Endothelial cell of umbilical vein (primary cell): ENCODE measurements at regions of chr6 and their contacts with region 1.

Region 1: DNA sequence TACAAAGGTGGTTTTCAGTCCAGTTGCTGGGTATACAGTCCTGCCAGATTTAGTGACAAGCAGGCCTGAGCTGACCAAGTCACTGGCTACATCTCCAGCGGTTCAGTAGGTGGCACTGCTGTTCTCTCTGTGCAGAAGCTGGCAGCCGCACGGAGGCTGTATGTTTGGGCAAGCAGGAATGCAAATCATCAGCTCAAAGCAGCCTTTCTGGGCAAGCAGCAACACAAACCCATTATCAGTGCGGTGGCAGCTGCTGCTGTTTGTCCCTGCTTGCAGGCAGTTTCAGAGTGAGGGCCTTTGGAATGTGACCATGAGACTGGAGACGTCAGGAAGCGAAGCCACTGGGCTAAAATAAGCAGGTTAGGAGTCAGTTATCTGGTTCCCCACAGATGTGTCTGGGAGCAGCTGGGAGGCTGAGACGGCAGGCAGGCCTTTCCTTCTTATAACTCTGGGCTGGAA is 72.5 kb downstream of the TXLNB start:
- DNase-seq: peak; percentile 83
- H3K4me3 ChIP-seq: no peak overlapping the region
- H3K27ac ChIP-seq: no peak overlapping the region
- H3K4me1 ChIP-seq: peaks cover 3% of the 10 kb centered on the region
- H3K27me3 ChIP-seq: no peaks in the 10 kb centered on the region
- CTCF ChIP-seq: peak; percentile 68 to 84
- POLR2A ChIP-seq: no peak

Region 2: DNA sequence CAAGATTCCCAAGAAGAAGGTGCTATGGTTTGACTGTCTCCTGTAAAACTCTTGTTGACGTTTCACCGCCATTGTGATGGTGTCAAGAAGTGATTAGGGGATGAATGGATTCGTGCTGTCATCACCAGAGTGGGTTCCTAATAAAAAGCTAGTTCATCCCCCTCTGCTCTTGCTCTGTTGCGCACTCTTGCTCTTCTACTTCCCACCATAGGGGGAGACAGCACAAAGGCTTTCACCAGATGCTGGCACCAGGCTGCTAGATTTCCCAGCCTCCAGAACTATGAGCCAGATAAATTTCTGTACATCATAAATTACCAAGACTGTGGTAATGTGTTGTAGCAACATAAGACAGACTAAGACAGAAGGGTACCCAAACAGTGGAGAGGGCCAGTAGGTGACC is 467.3 kb before region 1 on chr6:
- CTCF ChIA-PET with region 1: no interaction called
- POLR2A ChIA-PET with region 1: no interaction called
- dilution Hi-C with region 1: no loop called
- intact Hi-C with region 1: no loop called
- DNase-seq: no peak
- H3K4me3 ChIP-seq: no peak overlapping the region
- H3K27ac ChIP-seq: no peak overlapping the region
- H3K4me1 ChIP-seq: no peaks in the 10 kb centered on the region
- H3K27me3 ChIP-seq: no peaks in the 10 kb centered on the region
- CTCF ChIP-seq: peak in 1 of 2 donors; percentile 12
- POLR2A ChIP-seq: no peak

Region 3: GRCh38 chr6:139124887-139125672 is 94.2 kb before region 1 on chr6:
- CTCF ChIA-PET with region 1: interaction called, 4 read pairs
- POLR2A ChIA-PET with region 1: no interaction called
- dilution Hi-C with region 1: no loop called
- intact Hi-C with region 1: loop called (anchors 1 kb)
- DNase-seq: peak; percentile 26
- H3K4me3 ChIP-seq: no peak overlapping the region
- H3K27ac ChIP-seq: no peak overlapping the region
- H3K4me1 ChIP-seq: no peaks in the 10 kb centered on the region
- H3K27me3 ChIP-seq: no peaks in the 10 kb centered on the region
- CTCF ChIP-seq: peak; percentile 25 to 33
- POLR2A ChIP-seq: no peak

Region 4: DNA sequence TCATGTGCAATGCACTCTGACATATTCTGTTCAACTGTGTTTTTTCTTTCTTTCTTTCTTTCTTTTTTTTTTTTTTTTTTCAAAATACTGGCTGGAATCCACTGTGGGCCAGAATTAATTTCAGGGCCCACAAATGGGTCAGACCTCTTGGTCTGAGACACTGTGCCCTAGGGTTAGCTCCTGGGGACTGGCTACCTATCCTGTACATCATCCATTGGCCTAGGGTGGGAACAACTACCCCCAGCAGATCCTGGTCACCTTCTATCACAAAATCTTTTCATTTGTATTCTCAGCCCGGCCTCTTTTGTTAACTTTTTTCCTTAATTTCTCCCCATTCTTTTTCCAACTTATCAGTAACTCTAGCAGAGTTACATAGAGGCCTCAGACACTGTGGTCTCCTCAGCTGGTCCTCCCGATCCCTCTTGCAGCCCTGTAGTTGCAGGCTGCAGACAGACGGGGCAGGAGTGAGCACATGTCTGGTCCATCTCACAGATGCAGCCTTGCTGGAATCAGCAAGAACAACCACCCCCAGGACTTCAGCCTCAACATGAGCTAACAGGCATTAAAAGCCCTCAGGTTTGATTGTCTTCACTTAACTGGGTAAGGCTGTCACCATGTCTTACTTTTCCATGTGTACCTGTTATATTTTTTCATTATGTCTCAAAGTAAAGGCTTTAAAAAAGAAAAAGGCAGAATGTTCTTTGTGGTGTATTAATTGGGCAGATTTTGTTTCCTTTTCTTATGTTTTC is 31.2 kb after region 1 on chr6:
- CTCF ChIA-PET with region 1: interaction called, 8 read pairs
- POLR2A ChIA-PET with region 1: no interaction called
- dilution Hi-C with region 1: no loop called
- intact Hi-C with region 1: loop called (anchors 1 kb)
- DNase-seq: peak; percentile 60
- H3K4me3 ChIP-seq: no peak overlapping the region
- H3K27ac ChIP-seq: no peak overlapping the region
- H3K4me1 ChIP-seq: no peaks in the 10 kb centered on the region
- H3K27me3 ChIP-seq: no peaks in the 10 kb centered on the region
- CTCF ChIP-seq: peak; percentile 62 to 75
- POLR2A ChIP-seq: no peak

Region 5: GRCh38 chr6:139349464-139350020 is 130.2 kb after region 1 on chr6:
- CTCF ChIA-PET with region 1: interaction called, 11 read pairs
- POLR2A ChIA-PET with region 1: no interaction called
- dilution Hi-C with region 1: no loop called
- intact Hi-C with region 1: no loop called
- DNase-seq: no peak
- H3K4me3 ChIP-seq: no peak overlapping the region
- H3K27ac ChIP-seq: no peak overlapping the region
- H3K4me1 ChIP-seq: no peaks in the 10 kb centered on the region
- H3K27me3 ChIP-seq: peaks cover 3 to 4% of the 10 kb centered on the region in 2 experiments
- CTCF ChIP-seq: no peak
- POLR2A ChIP-seq: no peak

Region 6: DNA sequence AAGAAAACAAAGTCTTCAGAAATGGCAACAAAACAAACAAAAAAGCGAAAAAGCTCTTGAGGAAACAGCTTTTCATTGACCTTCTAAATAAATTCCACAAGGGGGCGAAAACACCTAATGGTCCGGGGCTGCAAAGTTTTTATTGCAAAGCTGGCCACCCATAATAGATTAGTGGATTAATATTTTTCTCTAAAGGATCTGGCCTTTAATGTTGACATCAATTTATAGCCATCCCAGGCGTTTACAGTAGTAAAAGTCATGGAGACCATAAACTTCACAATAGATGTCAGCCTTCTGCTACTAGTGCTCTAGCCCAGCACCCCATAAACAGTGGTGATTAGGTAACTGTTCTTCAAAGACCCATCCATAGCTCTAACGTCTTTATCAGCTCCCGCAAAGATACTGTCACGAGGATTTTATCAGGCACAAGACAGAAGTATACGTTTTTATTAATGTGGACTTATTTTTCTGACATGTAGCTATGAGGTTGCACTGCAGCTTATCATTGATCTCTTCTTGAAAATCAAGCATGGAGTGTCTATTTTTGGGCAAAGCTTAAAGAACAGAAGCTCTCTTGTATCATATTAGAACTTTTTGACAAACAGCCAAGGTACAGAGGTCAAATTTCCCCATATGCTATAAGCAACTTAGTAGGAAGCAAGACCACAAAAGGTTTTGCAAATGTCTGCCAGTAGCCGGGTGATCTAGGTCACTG is 150.4 kb after region 1 on chr6:
- CTCF ChIA-PET with region 1: interaction called, 258 read pairs
- POLR2A ChIA-PET with region 1: interaction called, 3 read pairs
- dilution Hi-C with region 1: no loop called
- intact Hi-C with region 1: loop called (anchors 1 kb)
- DNase-seq: peak; percentile 68
- H3K4me3 ChIP-seq: no peak overlapping the region
- H3K27ac ChIP-seq: no peak overlapping the region
- H3K4me1 ChIP-seq: peaks cover 41% of the 10 kb centered on the region
- H3K27me3 ChIP-seq: no peaks in the 10 kb centered on the region
- CTCF ChIP-seq: peak; percentile 43 to 46
- POLR2A ChIP-seq: no peak

Region 7: DNA sequence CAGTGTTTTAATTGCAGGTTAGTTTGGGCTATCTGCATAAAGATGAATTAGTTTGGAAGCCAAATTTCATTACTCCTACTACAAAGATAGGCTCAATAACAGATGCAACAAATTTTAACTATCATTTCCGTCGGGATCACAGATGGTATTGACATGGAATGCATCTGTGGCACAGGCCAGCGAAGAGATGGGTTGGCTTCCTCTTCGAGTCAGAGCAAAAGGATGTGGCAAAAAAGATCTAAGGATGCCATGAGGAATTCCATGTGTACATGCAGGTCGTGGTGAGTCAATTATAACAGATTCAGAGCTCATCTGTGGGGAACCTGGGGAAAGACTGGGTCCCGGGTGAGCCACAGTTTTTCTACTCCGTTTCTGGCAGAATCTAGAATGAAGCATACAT is 238.2 kb after region 1 on chr6:
- CTCF ChIA-PET with region 1: no interaction called
- POLR2A ChIA-PET with region 1: no interaction called
- dilution Hi-C with region 1: no loop called
- intact Hi-C with region 1: no loop called
- DNase-seq: no peak
- H3K4me3 ChIP-seq: no peak overlapping the region
- H3K27ac ChIP-seq: no peak overlapping the region
- H3K4me1 ChIP-seq: peaks cover 3% of the 10 kb centered on the region
- H3K27me3 ChIP-seq: no peaks in the 10 kb centered on the region
- CTCF ChIP-seq: no peak
- POLR2A ChIP-seq: no peak